ENCODE measurements at regions of chr17 and their contacts with region 1.

Region 1: GRCh38 chr17:7004398-7005253 is 7.8 kb upstream of the RNASEK start:
- DNase-seq: no peak
- H3K4me3 ChIP-seq: no peak overlapping the region
- H3K27ac ChIP-seq: no peak overlapping the region
- H3K4me1 ChIP-seq: peaks cover 0 to 4% (median 2%) of the 10 kb centered on the region in 4 donors
- H3K27me3 ChIP-seq: no peaks in the 10 kb centered on the region
- CTCF ChIP-seq: peak; percentile 66 to 70

Region 2: GRCh38 chr17:6666077-6666521 is 338.5 kb before region 1 on chr17:
- intact Hi-C with region 1: loop called (anchors 10 kb)
- DNase-seq: peak; percentile 69 to 78
- H3K4me3 ChIP-seq: no peak overlapping the region
- H3K27ac ChIP-seq: no peak overlapping the region
- H3K4me1 ChIP-seq: no peaks in the 10 kb centered on the region
- H3K27me3 ChIP-seq: peaks cover 0 to 34% of the 10 kb centered on the region in 2 donors
- CTCF ChIP-seq: peak; percentile 82 to 86

Measured in tibial artery (tissue), 4 donors.